GM18951 (cell line): ENCODE measurements at regions of chr1 and their contacts with region 1.

Region 1: DNA sequence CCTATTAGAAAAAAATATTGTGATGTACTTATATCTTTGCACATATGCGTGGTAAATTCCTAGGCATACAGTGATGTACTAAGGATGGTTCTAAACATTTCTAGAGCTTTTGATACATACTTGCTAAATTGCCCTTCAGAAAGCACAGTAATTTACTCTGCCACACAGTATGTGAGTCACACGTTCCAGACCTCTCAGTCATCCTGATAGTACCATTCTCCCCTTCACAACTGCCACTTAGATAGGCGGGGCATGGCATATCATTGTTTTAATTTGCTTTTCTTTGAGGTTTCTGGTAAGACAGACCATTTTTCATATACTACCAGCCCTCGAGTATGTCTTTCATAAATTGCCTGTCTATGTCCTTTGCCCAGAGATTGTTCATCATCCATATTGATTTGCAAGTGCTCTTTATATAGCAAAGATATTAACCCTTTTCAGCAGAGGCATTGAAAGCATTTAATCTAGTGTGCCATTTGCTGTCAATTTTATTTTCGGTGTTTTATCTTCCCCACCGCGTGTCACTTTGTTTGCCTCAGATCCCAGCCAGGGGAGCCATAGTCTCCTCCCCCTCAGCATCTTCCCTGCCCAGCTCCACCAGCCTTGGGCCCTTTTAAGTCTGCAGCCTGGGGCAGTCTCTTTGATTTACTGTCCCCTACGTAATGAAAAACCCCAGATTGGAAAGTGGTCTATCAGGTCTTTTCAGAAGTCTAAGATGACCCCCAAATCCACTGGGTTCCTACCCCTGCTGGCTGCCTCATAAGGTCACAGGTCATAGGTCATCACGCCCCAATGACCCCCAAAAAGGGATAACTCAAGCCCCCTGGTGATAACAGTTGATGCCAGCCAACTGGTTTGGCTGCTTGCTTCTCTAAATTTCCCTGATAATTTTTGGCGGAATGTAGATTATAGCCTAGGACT is 11.8 kb upstream of the PAX7 start:
- POLR2A ChIP-seq: no peak

Region 2: DNA sequence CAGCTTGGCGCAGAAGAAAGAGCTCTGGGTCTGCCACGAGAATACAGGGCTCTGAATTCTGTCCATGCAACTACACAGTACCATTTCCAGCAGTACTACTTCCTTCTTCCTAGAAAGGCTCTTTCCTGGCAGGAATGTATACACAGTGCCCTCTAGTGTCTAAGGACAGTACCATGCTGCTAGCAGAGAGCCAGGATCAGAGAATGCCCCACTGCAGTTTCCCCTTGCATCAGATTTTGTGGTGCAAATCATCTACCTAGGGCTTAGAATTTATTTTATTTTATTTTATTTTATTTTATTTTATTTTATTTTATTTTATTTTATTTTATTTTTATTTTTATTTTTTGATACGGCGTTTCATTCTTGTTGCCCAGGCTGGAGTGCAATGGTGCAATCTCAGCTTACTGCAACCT is 62.6 kb after region 1 on chr1:
- in situ Hi-C with region 1: no loop called
- POLR2A ChIP-seq: no peak

Region 3: DNA sequence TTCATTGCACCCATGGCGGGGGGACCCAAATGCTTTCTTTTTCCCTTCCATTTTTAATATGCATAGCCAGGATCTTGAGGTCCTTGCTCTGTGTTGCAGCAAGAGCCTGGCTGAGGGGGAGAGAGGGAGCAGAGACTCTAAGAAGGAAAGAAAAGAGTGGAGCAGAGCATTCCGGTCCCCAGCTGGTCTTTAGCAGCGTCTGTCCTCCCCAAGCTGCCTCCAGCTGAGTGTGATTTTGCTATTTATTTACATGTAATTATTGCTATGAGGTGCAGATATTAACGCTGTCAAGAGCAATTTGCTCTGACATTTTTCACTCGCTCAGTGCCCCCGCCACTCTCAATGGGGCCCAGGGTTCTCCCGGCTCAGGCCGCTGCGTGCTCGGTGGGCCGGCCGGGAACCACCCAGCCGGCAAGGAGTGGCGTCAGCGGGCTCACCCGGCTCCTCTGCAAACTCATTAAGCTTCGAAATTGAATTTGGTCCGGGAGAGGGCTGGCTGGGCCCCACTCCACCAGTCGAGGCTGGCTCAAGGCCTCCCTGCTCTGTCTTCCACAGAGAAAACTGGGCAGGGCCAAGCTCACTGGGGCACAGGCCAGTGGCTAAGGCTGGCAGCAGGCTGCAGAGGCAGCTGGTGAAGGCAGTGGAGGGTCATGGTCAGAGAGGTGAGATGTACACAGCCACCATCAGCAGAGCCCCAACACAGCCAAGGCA is 105.0 kb after region 1 on chr1:
- in situ Hi-C with region 1: no loop called
- POLR2A ChIP-seq: no peak

Region 4: GRCh38 chr1:18820791-18821641 is 202.2 kb after region 1 on chr1:
- in situ Hi-C with region 1: loop called (anchors 25 kb)
- POLR2A ChIP-seq: no peak